MCF 10A (cell line): ENCODE measurements at regions of chr1 and their contacts with region 1.

Region 1: GRCh38 chr1:70745199-70745598 is 302.4 kb downstream of the PTGER3 start:
- DNase-seq: peak; percentile 20
- H3K4me3 Mint-ChIP-seq: no peak overlapping the region
- H3K27ac Mint-ChIP-seq: no peak overlapping the region
- H3K4me1 Mint-ChIP-seq: no peaks in the 10 kb centered on the region
- H3K27me3 Mint-ChIP-seq: no peaks in the 10 kb centered on the region
- CTCF ChIP-seq: peak; percentile 13

Region 2: GRCh38 chr1:70809069-70809468 is 63.9 kb after region 1 on chr1:
- CTCF ChIA-PET with region 1: no interaction called
- POLR2A ChIA-PET with region 1: no interaction called
- intact Hi-C with region 1: no loop called
- DNase-seq: no peak
- H3K4me3 Mint-ChIP-seq: no peak overlapping the region
- H3K27ac Mint-ChIP-seq: no peak overlapping the region
- H3K4me1 Mint-ChIP-seq: no peaks in the 10 kb centered on the region
- H3K27me3 Mint-ChIP-seq: no peaks in the 10 kb centered on the region
- CTCF ChIP-seq: no peak

Region 3: GRCh38 chr1:71463144-71463543 is 717.9 kb after region 1 on chr1:
- CTCF ChIA-PET with region 1: no interaction called
- POLR2A ChIA-PET with region 1: no interaction called
- intact Hi-C with region 1: loop called (anchors 10 kb)
- DNase-seq: peak; percentile 32
- H3K4me3 Mint-ChIP-seq: no peak overlapping the region
- H3K27ac Mint-ChIP-seq: no peak overlapping the region
- H3K4me1 Mint-ChIP-seq: peaks cover 11% of the 10 kb centered on the region
- H3K27me3 Mint-ChIP-seq: no peaks in the 10 kb centered on the region
- CTCF ChIP-seq: no peak